Tibial artery (tissue), 4 donors: ENCODE measurements at regions of chr6 and their contacts with region 1.

Region 1: GRCh38 chr6:6008648-6009421 is 2.1 kb upstream of the NRN1 start:
- DNase-seq: peak; percentile 73 to 93
- H3K4me3 ChIP-seq: peak overlapping the region; percentile 56 to 69
- H3K27ac ChIP-seq: peak overlapping the region; percentile 86 to 90
- H3K4me1 ChIP-seq: peaks cover 0 to 54% (median 36%) of the 10 kb centered on the region in 4 donors
- H3K27me3 ChIP-seq: peaks cover 4 to 64% of the 10 kb centered on the region in 2 donors
- CTCF ChIP-seq: no peak

Region 2: DNA sequence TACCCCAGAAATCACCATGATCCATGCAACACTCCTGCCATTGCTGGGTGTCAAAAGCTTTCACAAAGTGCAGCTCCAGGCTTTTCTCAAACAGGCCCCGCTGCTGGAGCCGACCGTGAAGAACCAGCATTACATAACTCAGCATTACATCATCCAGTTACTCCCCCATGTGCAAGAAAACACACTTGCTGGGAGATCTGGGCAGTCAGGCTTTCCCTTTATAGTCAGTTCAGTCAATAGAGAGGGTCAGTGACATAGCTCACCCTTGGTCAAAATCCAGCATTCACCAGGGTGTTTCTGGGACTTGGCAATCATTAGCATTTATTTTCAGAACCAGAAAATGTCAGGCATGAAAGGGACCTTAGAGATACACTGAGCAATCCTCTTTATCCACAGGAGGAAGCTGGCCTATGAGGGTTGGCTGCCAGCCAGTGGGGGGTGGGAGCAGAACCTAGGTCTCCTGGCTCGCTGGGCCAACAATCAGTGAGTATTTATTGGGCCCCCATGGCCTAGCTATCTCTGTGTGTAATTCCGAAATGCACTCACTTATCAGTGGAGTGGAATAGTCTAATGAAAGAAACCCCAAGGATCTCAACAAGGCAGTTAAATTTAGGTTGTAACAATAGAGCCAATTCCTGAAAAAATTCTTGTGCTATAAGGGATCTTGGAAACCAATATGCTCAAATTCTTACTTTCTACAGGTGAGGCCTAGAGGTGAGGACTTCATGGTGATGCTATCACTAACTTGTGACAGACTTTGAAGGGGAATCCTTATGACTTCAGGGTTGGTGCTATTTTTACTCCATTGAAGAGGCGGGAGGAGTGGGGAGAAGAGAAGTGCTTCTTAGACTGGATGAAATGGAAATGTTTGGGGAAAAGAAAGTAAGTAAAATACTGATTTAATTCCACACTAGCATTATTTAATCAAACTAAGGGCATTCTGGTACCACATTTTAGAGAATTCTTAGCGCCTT is 802.7 kb before region 1 on chr6:
- intact Hi-C with region 1: loop called (anchors 10 kb)
- DNase-seq: peak; percentile 67 to 82
- H3K4me3 ChIP-seq: no peak overlapping the region
- H3K27ac ChIP-seq: peak overlapping the region; percentile 52 to 72
- H3K4me1 ChIP-seq: peaks cover 0 to 65% (median 43%) of the 10 kb centered on the region in 4 donors
- H3K27me3 ChIP-seq: no peaks in the 10 kb centered on the region
- CTCF ChIP-seq: no peak

Region 3: GRCh38 chr6:5670811-5671561 is 337.8 kb before region 1 on chr6:
- intact Hi-C with region 1: loop called (anchors 10 kb)
- DNase-seq: no peak
- H3K4me3 ChIP-seq: no peak overlapping the region
- H3K27ac ChIP-seq: peak overlapping the region; percentile 69 to 77
- H3K4me1 ChIP-seq: peaks cover 0 to 43% (median 12%) of the 10 kb centered on the region in 4 donors
- H3K27me3 ChIP-seq: no peaks in the 10 kb centered on the region
- CTCF ChIP-seq: no peak

Region 4: GRCh38 chr6:6085928-6086668 is 77.3 kb after region 1 on chr6:
- intact Hi-C with region 1: no loop called
- DNase-seq: no peak
- H3K4me3 ChIP-seq: no peak overlapping the region
- H3K27ac ChIP-seq: no peak overlapping the region
- H3K4me1 ChIP-seq: no peaks in the 10 kb centered on the region
- H3K27me3 ChIP-seq: no peaks in the 10 kb centered on the region
- CTCF ChIP-seq: no peak